Activated CD4-positive, alpha-beta T cell treated with anti-CD3 and anti-CD28 coated beads, Interleukin-2, amount 10 ng/mL, durations not matched to agents 24 days and 14 days (primary cell): ENCODE measurements at regions of chr16 and their contacts with region 1.

Region 1: GRCh38 chr16:20741554-20742285 is at the start of gene THUMPD1:
- DNase-seq: peak; percentile 98
- H3K4me3 Mint-ChIP-seq: peak within 1 kb of the TSS; percentile 95
- H3K27ac Mint-ChIP-seq: peak within 1 kb of the TSS; percentile 94
- H3K4me1 Mint-ChIP-seq: peaks cover 14% of the 10 kb centered on the region
- H3K27me3 Mint-ChIP-seq: no peaks in the 10 kb centered on the region
- total RNA-seq, gene THUMPD1: 44.7 and 47.4 TPM in 2 replicates

Region 2: DNA sequence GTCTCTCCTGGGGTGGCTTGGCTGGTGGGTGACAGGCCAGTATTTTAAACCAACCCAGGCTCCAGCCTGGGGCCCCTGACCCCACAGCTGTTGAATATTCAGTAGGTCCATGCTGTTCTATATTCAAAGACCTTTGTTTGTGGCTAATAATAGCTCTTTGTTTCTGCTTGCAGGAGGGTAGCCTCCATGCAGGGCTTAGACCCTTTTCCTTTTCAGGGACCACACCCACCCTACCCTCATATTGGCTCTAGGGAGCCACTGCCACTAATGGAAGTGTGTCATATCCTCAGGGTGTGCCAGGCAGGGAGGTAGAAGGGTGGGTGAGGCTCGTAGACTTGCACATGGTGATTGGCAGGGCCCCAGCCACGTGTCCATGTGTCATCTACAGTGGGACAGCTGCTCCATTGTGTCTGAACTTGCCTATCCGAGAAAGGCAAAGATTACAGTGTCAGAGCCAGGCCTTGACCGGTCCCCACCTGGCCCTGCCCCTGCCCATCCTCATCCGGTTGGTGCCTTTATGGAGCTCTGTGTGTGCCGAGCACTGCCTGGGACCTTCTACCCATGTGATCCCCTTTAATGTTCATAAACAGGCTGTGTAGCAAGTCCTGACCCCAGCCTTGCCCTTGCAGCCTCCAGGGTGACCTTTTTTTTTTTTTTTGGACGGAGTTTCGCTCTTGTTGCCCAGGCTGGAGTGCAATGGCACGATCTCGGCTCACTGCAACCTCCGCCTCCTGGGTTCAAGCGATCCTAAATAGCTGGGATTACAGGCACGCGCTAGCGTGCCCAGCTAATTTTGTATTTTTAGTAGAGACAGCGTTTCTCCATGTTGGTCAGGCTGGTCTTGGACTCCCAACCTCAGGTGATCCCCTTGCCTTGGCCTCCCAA is 1735.9 kb before region 1 on chr16:
- intact Hi-C with region 1: no loop called
- DNase-seq: no peak
- H3K4me3 Mint-ChIP-seq: no peak overlapping the region
- H3K27ac Mint-ChIP-seq: no peak overlapping the region
- H3K4me1 Mint-ChIP-seq: no peaks in the 10 kb centered on the region
- H3K27me3 Mint-ChIP-seq: peaks cover 1% of the 10 kb centered on the region

Region 3: DNA sequence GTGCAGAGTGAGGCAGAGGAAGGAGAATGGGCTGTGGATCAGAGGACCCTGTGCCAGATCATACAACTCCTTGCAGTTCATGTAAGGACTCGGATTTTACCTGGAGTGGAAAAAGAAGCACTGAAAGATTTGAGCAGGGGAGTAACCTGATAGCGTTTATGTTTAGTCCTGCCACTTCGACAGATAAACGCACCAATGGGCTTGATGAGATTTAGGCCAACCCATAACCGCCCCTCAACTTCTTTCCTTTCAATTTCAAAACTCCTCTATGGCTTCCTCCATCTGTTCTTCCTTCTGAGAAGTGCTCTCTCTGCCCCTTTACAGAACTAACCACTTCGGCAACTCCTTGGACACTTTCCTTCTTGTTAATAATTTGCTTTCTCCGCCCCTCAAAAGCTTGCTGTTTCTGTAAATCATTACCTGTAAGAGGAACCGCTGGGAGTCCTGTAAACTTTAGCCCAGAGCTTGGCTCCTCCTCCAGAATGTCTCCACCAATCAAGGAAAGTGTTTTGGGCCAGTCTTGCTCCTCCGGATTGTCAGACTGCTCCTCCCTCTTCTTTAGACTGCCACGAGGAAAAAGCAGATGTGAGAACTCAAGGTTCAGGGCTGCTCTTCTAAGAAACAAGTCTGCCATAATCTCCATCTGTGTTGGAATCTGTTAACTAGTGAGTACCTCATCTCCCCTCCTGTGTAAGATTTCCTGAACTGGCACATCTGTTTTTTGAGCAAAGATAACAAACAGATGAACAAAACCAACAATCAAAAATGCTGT is 21.9 kb after region 1 on chr16 and contains the start of gene ACSM3:
- intact Hi-C with region 1: loop called (anchors 1 kb)
- DNase-seq: peak; percentile 91
- H3K4me3 Mint-ChIP-seq: peak within 1 kb of the TSS; percentile 87
- H3K27ac Mint-ChIP-seq: peak within 1 kb of the TSS; percentile 84
- H3K4me1 Mint-ChIP-seq: peaks cover 13% of the 10 kb centered on the region
- H3K27me3 Mint-ChIP-seq: no peaks in the 10 kb centered on the region
- total RNA-seq, gene ACSM3: 2.7 and 3.5 TPM in 2 replicates

Region 4: DNA sequence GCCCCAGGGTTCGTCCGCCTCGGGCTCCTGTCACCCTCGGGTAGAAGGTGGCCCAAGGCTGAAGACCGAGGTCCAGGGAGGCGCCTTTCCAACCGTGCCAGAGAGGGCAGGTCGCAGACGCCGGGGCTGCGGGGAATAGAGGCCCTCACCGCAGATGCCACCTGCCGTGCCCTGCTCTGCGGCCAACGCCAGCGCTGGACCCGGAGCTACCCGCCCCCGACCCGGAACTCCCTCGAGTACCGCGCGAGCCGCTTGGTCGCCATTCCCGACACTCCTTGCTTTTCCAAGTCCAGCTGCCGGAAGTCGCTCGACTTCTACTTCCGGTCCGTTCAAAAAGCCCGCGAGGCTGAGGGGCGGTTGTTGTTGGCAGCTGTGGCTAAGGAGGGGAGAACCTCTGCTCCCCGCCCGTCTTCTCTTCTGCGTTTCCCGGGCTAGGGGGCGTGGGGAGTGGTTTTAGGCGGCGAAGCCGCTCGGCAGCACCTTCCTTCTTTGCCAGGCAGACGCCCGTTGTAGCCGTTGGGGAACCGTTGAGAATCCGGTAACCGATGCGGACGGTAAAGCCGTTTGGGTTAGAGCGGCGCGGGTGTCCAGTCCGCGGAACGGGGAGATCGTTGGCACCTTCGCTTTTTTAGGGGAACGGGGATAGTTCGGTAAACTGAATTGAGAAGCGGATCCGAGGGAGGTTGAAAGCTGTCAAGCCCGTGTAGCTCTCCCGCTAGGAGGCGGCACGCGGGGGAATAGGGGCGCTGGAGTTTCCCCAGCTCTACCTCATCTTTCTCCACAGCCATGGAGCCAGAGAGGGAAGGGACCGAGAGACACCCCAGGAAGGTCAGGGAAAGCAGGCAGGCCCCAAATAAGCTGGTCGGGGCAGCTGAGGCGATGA is 64.7 kb after region 1 on chr16 and contains the starts of genes ERI2 and REXO5:
- intact Hi-C with region 1: loop called (anchors 1 kb)
- DNase-seq: peak; percentile 93
- H3K4me3 Mint-ChIP-seq: peak within 1 kb of the TSS; percentile 94
- H3K27ac Mint-ChIP-seq: peak within 1 kb of the TSS; percentile 96
- H3K4me1 Mint-ChIP-seq: peaks cover 24% of the 10 kb centered on the region
- H3K27me3 Mint-ChIP-seq: no peaks in the 10 kb centered on the region
- total RNA-seq, gene ERI2: 15.1 and 15.7 TPM in 2 replicates
- total RNA-seq, gene REXO5: 9.3 and 11.7 TPM in 2 replicates

Region 5: DNA sequence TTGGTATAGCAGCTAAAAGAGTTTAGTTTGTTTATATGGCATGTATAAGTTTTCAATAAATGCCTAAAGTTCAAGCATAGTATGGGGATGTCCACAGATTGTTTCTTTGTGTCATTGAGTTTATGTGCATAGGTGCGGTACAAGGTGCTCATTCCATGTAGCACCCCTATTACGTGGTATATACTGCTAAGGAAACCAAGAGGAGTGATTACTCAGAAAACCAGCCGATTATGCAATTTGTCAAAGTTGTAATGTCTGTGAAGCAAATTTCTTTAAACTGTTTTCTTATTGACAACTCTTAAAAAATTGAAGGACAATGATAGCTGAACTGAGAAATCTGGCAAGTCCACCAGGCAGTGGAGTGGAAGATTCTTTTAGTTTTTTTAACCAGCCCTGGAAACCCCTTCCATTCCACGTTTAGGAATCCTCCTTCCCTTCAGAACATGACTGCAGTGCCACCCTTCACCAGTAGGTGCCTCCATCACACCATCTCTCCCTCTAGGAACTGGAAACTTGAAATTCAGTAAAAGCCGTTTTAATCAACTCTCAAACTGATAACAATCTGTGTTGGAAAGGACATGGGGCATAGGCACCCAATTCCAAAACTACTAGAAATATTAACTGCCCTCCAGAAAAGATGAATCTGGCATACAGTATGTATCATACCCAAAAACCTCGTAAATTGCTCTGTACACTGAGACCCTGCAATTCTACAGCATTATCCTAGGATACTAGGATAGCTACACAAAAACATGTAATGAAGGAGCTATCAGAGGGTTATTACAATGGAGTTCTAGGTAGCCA is 108.1 kb after region 1 on chr16:
- intact Hi-C with region 1: no loop called
- DNase-seq: peak; percentile 91
- H3K4me3 Mint-ChIP-seq: no peak overlapping the region
- H3K27ac Mint-ChIP-seq: peak overlapping the region; percentile 41
- H3K4me1 Mint-ChIP-seq: peaks cover 25% of the 10 kb centered on the region
- H3K27me3 Mint-ChIP-seq: no peaks in the 10 kb centered on the region